Right ventricle myocardium superior (tissue), 1 donor: ENCODE measurements at regions of chr2 and their contacts with region 1.

Region 1: GRCh38 chr2:219149667-219150066 is 10.9 kb downstream of the NHEJ1 start:
- DNase-seq: no peak
- ATAC-seq: no peak

Region 2: GRCh38 chr2:219057709-219058540 is 91.7 kb before region 1 on chr2:
- intact Hi-C with region 1: loop called (anchors 5 kb)
- DNase-seq: peak; percentile 84
- ATAC-seq: peak; percentile 97

Region 3: DNA sequence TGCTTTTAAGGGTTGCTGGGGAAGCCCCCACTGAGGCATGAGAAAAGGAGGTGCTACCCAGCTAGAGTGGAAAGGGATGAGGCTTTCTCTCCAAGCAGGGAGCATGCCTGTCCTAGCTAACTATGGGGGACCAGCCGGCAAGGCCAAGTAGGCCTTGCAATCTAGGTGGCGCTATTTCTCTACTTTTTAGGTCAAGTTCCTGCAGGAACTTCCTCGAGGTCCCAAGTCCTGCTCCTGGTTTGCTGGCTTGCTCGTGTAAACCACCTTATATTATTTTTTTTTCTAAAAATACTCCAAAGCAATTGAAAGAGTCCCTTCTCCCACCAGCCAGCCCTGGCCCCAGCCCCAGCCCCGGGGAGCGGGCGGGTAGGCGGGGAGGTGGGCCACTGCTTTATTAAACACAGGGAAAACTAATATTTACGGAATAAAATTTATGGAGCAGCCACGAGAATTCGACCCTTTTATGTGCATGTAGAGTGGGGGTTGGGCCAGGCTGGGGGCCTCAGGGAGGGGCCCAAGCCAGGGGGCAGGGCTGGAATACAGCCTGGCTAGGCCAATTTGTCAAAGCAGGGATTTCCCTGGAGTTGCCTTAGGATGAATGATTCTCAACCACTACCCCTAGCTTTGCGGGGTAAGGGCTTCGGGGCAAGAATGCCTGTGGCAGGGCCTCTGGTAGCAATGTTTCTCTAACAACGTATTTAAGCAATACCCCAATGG is 76.1 kb before region 1 on chr2:
- intact Hi-C with region 1: loop called (anchors 5 kb)
- DNase-seq: no peak
- ATAC-seq: no peak